ENCODE measurements at regions of chr18 and their contacts with region 1.

Region 1: GRCh38 chr18:51879329-51879728 is 460.7 kb upstream of the DCC start:
- DNase-seq: no peak
- ATAC-seq: no peak

Region 2: GRCh38 chr18:51789871-51790270 is 89.5 kb before region 1 on chr18:
- intact Hi-C with region 1: loop called (anchors 10 kb)
- DNase-seq: no peak
- ATAC-seq: no peak

Measured in sciatic nerve (tissue), 2 donors.